Naive thymus-derived CD4-positive, alpha-beta T cell (primary cell): ENCODE measurements at regions of chr10 and their contacts with region 1.

Region 1: GRCh38 chr10:70169649-70170364 is 507 bp downstream of the SAR1A start:
- DNase-seq: peak in 2 of 9 donors; percentile 8 to 30
- ATAC-seq: peak; percentile 18
- H3K4me3 ChIP-seq: peak overlapping the region; percentile 88
- H3K4me3 Mint-ChIP-seq: peak overlapping the region; percentile 86 to 97 (median 94)
- H3K27ac ChIP-seq: peak overlapping the region; percentile 95
- H3K27ac Mint-ChIP-seq: peak overlapping the region; percentile 83 to 98 (median 96)
- H3K4me1 ChIP-seq: peaks cover 47 to 49% of the 10 kb centered on the region in 2 donors
- H3K4me1 Mint-ChIP-seq: peaks cover 46 to 70% (median 65%) of the 10 kb centered on the region in 7 donors
- H3K27me3 ChIP-seq: no peaks in the 10 kb centered on the region
- H3K27me3 Mint-ChIP-seq: no peaks in the 10 kb centered on the region

Region 2: DNA sequence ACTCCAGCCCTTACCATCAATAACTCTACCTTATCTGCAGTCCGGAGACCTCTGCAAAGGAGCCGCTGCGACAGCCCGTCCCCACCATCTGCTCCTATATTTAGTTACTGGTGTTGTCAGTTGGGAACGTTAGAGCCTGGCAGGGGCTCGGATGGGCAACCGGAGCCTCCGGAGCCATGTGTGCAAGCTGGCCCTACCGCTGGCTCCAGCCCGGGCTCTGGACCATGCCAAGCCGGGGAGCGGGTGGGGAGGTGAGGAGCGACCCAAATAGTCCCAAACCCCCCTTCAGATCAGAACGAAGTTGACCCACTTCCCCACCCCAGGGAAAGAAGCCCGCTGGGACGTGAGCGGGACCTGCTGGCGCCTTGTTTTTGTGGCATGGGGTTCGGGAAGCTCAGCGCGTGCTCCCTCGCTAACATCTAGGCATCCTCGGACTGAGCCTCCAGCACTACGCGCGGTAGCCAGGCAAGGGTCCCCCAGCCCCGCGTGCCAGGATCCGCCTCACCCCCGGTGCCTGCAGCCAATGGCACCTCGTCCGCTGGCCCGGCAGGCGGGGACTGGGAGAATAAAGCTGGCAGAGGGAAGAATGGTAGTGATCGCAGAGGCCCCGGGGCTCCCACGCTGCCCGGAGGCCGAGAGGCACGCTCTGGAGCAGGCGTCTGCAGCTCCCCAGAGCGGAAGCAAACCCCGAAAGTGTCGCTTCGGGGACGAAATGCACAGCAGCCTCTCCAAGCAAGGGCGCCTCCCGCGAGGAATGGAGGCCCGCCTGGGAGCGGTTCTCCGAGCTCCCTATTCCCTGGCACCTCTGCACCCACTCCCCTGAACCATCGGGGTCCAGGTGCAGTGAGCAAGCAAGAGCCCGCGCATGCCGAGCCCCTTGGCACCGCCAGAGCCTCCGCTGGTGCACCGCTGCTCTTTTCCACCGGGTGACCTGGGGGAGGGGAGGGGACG is 211.9 kb after region 1 on chr10:
- CTCF ChIA-PET with region 1: interaction called, 3 read pairs
- POLR2A ChIA-PET with region 1: no interaction called
- intact Hi-C with region 1: loop called (anchors 1 to 5 kb)
- DNase-seq: peak in 6 of 9 donors; percentile 25 to 53 (median 40)
- ATAC-seq: peak; percentile 43
- H3K4me3 ChIP-seq: peak overlapping the region; percentile 94
- H3K4me3 Mint-ChIP-seq: peak overlapping the region; percentile 82 to 92 (median 90)
- H3K27ac ChIP-seq: peak overlapping the region; percentile 32
- H3K27ac Mint-ChIP-seq: peak overlapping the region in 6 of 9 donors; percentile 17 to 86 (median 46)
- H3K4me1 ChIP-seq: peaks cover 4 to 6% of the 10 kb centered on the region in 2 donors
- H3K4me1 Mint-ChIP-seq: peaks cover 2 to 20% (median 10%) of the 10 kb centered on the region in 7 donors
- H3K27me3 ChIP-seq: no peaks in the 10 kb centered on the region
- H3K27me3 Mint-ChIP-seq: no peaks in the 10 kb centered on the region